Left colon (tissue), 2 donors: ENCODE measurements at regions of chr12 and their contacts with region 1.

Region 1: DNA sequence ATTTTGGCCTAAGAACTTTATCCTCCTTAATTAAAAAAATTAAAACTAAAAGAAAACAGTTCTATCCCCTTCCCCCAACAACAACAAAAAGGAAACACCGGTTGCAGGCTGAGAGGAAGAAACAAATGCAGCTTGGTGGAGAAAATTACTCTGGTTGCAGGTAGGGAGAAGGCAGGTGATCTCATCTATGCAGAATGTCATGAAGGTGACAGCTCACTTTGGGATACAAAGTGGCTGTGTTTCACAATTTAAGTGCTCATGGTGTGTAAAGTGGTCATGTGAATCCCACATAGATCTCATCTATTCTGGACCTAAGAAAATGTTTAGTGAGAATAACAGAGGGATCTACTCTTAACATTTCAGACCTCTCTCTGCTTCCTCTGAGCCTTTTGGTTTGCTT is 219.7 kb upstream of the PKP2 start:
- DNase-seq: no peak
- ATAC-seq: no peak

Region 2: GRCh38 chr12:32964981-32965585 is 151.2 kb before region 1 on chr12:
- intact Hi-C with region 1: loop called in 1 of 2 experiments (anchors 10 kb)
- DNase-seq: no peak
- ATAC-seq: no peak